Mammary epithelial cell (primary cell): ENCODE measurements at regions of chr12 and their contacts with region 1.

Region 1: GRCh38 chr12:96035278-96036236 is at the start of gene LTA4H:
- DNase-seq: peak; percentile 98
- H3K4me3 ChIP-seq: peak within 1 kb of the TSS; percentile 75 to 99 (median 87)
- H3K27ac ChIP-seq: peak within 1 kb of the TSS; percentile 81
- H3K4me1 ChIP-seq: peaks cover 14% of the 10 kb centered on the region
- H3K27me3 ChIP-seq: no peaks in the 10 kb centered on the region
- CTCF ChIP-seq: no peak
- total RNA-seq, gene LTA4H: 103 to 110 TPM

Region 2: DNA sequence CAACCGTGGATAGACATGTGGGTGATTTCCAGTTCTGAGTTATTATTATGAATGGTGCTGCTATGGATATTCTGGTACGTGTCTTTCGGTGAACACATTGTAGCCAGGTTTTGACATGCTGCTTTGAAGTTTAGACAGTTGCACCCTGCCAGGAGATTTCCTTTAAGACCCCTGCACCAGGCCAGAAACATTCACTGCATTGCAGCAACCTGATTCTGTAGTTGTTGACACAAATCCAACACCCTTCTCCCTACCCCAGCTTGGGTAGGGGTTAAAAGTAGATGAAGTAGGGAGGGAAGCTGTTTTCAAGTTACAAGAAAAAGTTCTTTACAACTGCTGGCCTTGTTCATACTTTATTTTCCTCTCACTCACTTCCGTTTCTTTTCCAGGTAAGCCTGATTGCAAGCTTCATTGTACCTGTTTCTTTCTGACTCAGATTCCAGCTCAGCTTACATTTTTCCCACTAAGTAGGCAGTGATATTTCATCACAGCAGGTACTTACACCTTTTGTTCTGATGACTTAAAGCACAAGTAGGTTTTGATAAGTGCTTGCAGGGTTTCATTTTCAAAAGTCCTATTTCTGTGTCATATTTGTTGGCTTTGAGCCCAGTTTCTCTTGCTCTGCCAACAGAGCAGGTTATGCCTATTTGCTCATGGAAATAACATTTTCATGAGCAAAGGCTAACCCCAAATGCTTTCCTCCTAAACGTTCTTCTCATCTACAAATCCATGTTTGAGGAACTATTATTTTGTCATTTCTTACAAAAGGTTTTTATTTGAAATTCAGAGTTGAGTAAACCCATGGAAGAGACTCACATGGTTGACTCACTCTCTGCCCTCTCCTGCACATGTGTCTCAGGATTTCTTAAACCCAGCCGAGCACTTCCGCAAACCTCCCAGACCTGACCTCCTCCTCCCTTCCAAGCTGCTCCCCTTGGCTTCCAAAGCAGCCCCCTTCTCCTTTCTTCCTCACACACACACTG is 12.0 kb after region 1 on chr12:
- CTCF ChIA-PET with region 1: no interaction called
- dilution Hi-C with region 1: no loop called
- in situ Hi-C with region 1: no loop called
- intact Hi-C with region 1: loop called (anchors 1 kb)
- DNase-seq: peak; percentile 97
- H3K4me3 ChIP-seq: no peak overlapping the region
- H3K27ac ChIP-seq: peak overlapping the region; percentile 91
- H3K4me1 ChIP-seq: peaks cover 31% of the 10 kb centered on the region
- H3K27me3 ChIP-seq: no peaks in the 10 kb centered on the region
- CTCF ChIP-seq: no peak